ENCODE measurements at regions of chr19 and their contacts with region 1.

Region 1: DNA sequence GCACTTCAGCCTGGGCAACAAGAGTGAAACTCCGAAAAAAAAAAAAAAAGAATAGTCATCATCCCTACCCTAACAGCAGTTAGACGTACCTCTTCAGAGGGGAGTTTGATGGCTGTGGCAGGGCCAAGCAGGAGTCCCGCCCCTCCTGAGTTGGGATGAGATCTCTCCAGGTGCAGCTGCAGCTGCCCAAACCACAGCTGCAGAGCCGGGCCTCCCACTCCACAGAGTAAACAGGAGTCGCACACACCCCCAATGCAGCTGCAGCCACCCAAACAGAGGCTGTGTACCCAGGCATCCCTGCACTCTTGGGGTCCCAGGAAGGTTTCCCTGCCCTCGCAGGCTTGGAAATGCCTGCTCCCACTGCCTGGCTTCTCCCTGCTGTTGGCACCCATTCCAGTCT is 17.4 kb upstream of the MLLT1 start:
- DNase-seq: no peak
- H3K4me3 Mint-ChIP-seq: no peak overlapping the region
- H3K27ac Mint-ChIP-seq: no peak overlapping the region
- H3K4me1 Mint-ChIP-seq: peaks cover 3% of the 10 kb centered on the region
- H3K27me3 Mint-ChIP-seq: peaks cover 2% of the 10 kb centered on the region

Region 2: GRCh38 chr19:6161271-6161850 is 135.8 kb before region 1 on chr19:
- CTCF ChIA-PET with region 1: interaction called, 18 read pairs
- POLR2A ChIA-PET with region 1: no interaction called
- intact Hi-C with region 1: loop called (anchors 1 kb)
- DNase-seq: peak; percentile 66
- H3K4me3 Mint-ChIP-seq: no peak overlapping the region
- H3K27ac Mint-ChIP-seq: no peak overlapping the region
- H3K4me1 Mint-ChIP-seq: peaks cover 7% of the 10 kb centered on the region
- H3K27me3 Mint-ChIP-seq: no peaks in the 10 kb centered on the region

Region 3: GRCh38 chr19:6167115-6167514 is 130.1 kb before region 1 on chr19:
- CTCF ChIA-PET with region 1: interaction called, 18 read pairs
- POLR2A ChIA-PET with region 1: no interaction called
- intact Hi-C with region 1: loop called (anchors 1 kb)
- DNase-seq: no peak
- H3K4me3 Mint-ChIP-seq: no peak overlapping the region
- H3K27ac Mint-ChIP-seq: no peak overlapping the region
- H3K4me1 Mint-ChIP-seq: no peaks in the 10 kb centered on the region
- H3K27me3 Mint-ChIP-seq: peaks cover under 1% of the 10 kb centered on the region

Region 4: DNA sequence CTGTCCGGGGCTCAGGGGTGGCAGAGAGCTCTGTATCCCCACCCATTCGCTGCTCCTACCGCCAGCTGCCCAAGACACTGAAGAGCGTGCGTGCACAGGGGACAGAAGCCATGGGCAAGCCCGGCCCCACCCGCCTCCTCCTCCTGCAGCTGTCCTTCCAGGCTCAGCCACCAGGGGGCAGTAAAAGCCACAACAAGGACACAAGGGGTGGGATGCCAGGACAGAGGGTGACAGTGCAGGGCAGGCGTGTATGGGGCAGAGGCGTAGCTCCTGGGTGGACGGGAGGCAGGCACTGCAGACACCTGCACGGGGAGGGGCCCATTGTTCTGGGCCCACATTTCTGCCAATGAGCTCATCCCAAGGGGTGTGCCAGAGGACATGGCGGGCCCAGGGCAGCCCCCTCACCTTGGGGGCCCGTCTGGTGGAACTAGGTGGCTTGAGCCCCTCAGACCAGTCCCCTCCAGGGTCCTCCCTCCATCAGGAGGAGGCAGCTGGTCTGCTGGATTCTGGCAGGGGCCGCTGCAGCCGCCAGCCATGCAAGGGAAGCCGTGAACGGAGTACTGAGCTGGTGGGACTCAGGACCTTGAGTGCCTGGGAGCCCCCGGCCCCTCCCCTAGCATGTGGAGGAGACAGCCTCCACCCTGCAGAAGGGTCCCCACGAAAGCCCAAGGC is 78.6 kb before region 1 on chr19:
- CTCF ChIA-PET with region 1: interaction called, 65 read pairs
- POLR2A ChIA-PET with region 1: no interaction called
- intact Hi-C with region 1: loop called (anchors 2 kb)
- DNase-seq: peak; percentile 89
- H3K4me3 Mint-ChIP-seq: no peak overlapping the region
- H3K27ac Mint-ChIP-seq: no peak overlapping the region
- H3K4me1 Mint-ChIP-seq: no peaks in the 10 kb centered on the region
- H3K27me3 Mint-ChIP-seq: no peaks in the 10 kb centered on the region

Measured in activated CD4-positive, alpha-beta memory T cell treated with anti-CD3 and anti-CD28 coated beads for 36 hours (primary cell).